ENCODE measurements at regions of chr10 and their contacts with region 1.

Region 1: DNA sequence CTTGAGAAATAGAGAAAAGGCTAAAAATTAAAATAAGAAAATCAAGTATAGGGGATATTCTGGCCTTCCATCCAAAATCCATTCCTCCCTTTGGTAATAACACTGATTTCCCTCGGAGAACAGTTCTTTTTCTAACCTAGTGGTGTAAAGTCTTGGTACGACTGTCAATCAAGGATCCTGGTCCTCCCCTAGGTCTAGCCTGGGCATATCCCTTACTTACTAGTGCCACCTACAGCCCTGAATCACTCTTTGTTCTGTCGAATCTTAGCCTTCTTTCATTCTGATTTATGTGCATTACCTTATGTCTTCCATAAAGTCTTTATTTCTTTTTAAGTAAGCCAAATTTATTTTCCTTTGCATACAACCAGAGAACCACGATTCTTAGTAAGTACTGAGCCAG is 298.7 kb upstream of the LRRTM3 start:
- DNase-seq: peak; percentile 96
- ATAC-seq: peak; percentile 92
- H3K4me3 ChIP-seq: no peak overlapping the region
- H3K27ac ChIP-seq: no peak overlapping the region
- H3K4me1 ChIP-seq: peaks cover 37% of the 10 kb centered on the region
- H3K27me3 ChIP-seq: no peaks in the 10 kb centered on the region
- CTCF ChIP-seq: peak; percentile 99

Region 2: GRCh38 chr10:64977915-64978314 is 1649.2 kb before region 1 on chr10:
- CTCF ChIA-PET with region 1: no interaction called
- POLR2A ChIA-PET with region 1: no interaction called
- intact Hi-C with region 1: loop called (anchors 10 kb)
- DNase-seq: peak; percentile 58
- ATAC-seq: peak; percentile 29; the same call in 1 of the 2 replicates
- H3K4me3 ChIP-seq: no peak overlapping the region
- H3K27ac ChIP-seq: no peak overlapping the region
- H3K4me1 ChIP-seq: no peaks in the 10 kb centered on the region
- H3K27me3 ChIP-seq: no peaks in the 10 kb centered on the region
- CTCF ChIP-seq: peak; percentile 60

Region 3: DNA sequence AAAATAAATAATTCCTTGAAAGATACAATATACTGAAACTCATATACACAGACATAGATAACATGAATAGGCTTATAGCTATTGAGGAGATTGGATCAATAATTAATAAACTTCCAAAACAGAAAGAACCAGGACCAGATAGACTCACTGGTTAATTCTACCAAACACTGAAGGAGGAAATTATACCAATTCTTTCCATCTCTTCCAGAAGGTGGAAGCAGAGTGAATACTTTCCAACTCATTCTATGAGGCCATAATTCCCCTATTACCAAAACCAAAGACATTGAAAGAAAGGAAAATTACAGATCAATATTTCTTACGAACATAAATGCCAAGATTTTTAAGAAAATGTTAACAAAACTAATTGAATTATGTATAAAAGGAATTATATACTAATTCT is 326.1 kb before region 1 on chr10:
- CTCF ChIA-PET with region 1: no interaction called
- POLR2A ChIA-PET with region 1: no interaction called
- intact Hi-C with region 1: loop called (anchors 1 kb)
- DNase-seq: peak; percentile 57
- ATAC-seq: peak; percentile 71; the same call in 1 of the 2 replicates
- H3K4me3 ChIP-seq: no peak overlapping the region
- H3K27ac ChIP-seq: no peak overlapping the region
- H3K4me1 ChIP-seq: no peaks in the 10 kb centered on the region
- H3K27me3 ChIP-seq: no peaks in the 10 kb centered on the region
- CTCF ChIP-seq: peak; percentile 62

Region 4: DNA sequence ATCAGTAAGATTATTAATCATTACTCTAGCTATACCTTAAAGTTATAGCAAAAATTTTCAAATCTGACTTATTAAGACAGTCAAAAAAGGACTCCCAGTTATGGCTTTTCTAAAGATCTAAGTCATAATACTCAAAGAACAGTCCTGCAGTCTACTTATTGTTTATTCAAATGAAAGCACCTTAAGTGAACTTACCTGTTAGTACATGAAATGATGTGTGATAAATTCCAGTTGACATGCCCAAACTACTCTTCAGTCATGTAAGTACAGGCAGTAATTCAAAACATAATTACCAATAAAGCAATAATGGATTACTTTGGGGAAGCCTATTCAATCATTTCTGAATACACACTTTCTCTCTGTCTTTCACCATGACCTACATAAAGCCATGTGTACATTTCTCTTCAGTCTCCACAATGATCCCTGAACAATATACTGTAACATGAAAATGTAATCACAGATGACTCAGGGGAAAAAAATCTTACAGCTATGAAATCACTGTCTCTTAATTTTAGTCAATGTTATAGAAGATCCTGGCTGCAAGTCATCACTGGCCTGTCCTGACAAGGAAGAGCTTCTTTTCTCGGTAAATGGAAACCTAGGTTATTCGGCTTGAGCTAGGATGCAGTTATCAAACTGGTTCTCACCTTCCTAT is 122.0 kb before region 1 on chr10:
- CTCF ChIA-PET with region 1: no interaction called
- POLR2A ChIA-PET with region 1: no interaction called
- intact Hi-C with region 1: no loop called
- DNase-seq: peak; percentile 36
- ATAC-seq: peak; percentile 37; the same call in 1 of the 2 replicates
- H3K4me3 ChIP-seq: no peak overlapping the region
- H3K27ac ChIP-seq: no peak overlapping the region
- H3K4me1 ChIP-seq: no peaks in the 10 kb centered on the region
- H3K27me3 ChIP-seq: no peaks in the 10 kb centered on the region
- CTCF ChIP-seq: no peak

Region 5: GRCh38 chr10:66519616-66520015 is 107.5 kb before region 1 on chr10:
- CTCF ChIA-PET with region 1: no interaction called
- POLR2A ChIA-PET with region 1: no interaction called
- intact Hi-C with region 1: loop called (anchors 2 kb)
- DNase-seq: peak; percentile 97
- ATAC-seq: peak; percentile 70
- H3K4me3 ChIP-seq: no peak overlapping the region
- H3K27ac ChIP-seq: peak overlapping the region; percentile 29
- H3K4me1 ChIP-seq: peaks cover 24% of the 10 kb centered on the region
- H3K27me3 ChIP-seq: no peaks in the 10 kb centered on the region
- CTCF ChIP-seq: no peak

Region 6: DNA sequence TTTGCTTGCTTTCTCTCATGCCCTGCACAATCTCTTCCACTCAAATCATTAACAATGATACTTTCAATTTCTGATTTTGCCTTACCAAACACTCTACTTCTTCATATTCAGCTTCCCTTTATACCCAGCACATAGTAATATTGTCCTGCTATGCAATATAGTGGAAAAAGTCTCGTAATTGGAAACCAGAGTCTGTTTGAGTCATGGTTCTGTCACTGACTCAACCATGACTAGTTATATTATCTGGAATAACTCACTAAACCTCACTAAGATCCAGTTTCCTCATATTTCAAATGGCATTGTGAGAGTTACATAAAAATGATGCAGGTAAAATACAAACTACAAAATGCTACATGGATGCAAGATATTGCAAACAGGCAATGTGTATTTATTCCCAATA is 200.2 kb after region 1 on chr10:
- CTCF ChIA-PET with region 1: no interaction called
- POLR2A ChIA-PET with region 1: no interaction called
- intact Hi-C with region 1: loop called (anchors 2 kb)
- DNase-seq: peak; percentile 100
- ATAC-seq: peak; percentile 85
- H3K4me3 ChIP-seq: peak overlapping the region; percentile 11
- H3K27ac ChIP-seq: peak overlapping the region; percentile 70
- H3K4me1 ChIP-seq: peaks cover 42% of the 10 kb centered on the region
- H3K27me3 ChIP-seq: no peaks in the 10 kb centered on the region
- CTCF ChIP-seq: no peak

Region 7: GRCh38 chr10:67520924-67521520 is 893.9 kb after region 1 on chr10:
- CTCF ChIA-PET with region 1: no interaction called
- POLR2A ChIA-PET with region 1: no interaction called
- intact Hi-C with region 1: loop called (anchors 2 kb)
- DNase-seq: peak; percentile 94
- ATAC-seq: peak; percentile 85
- H3K4me3 ChIP-seq: no peak overlapping the region
- H3K27ac ChIP-seq: no peak overlapping the region
- H3K4me1 ChIP-seq: peaks cover 17% of the 10 kb centered on the region
- H3K27me3 ChIP-seq: peaks cover 18% of the 10 kb centered on the region
- CTCF ChIP-seq: peak; percentile 100